AG04449 (cell line): ENCODE measurements at regions of chr18 and their contacts with region 1.

Region 1: DNA sequence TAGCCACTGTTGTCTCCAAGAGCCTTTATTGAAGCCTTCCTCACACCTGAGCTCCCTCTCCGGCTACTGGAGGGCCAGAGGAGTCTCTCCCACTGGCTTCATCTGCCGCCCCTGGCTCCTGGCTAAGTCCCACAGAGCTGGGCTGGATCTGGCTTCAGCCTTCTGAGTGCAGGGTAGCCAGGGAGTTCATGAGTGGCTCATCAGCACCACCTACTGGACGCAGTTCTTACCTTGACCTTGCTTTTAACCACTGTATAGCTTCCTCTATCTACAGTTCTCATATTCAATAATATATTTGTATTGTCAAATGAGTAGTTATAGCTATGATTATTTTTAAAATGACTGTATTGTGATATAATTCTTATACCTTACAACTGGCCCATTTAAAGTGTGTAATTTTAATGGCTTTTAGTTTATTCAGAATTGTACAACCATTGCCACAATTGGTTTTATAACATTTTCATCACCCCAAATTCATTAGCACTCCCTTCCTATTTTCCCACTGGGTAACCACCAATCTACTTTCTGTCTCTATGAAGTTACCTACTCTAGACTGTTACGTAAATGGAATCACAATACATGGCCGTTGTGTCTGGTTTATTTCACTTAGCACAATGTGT is 17.7 kb downstream of the CNDP1 start:
- DNase-seq: peak; percentile 29
- H3K4me3 ChIP-seq: no peak overlapping the region
- CTCF ChIP-seq: peak; percentile 81

Region 2: GRCh38 chr18:74196220-74197119 is 355.6 kb before region 1 on chr18:
- CTCF ChIA-PET with region 1: interaction called, 54 read pairs
- POLR2A ChIA-PET with region 1: no interaction called
- DNase-seq: no peak
- H3K4me3 ChIP-seq: peak overlapping the region; percentile 7
- CTCF ChIP-seq: peak; percentile 79

Region 3: GRCh38 chr18:74310411-74310810 is 241.6 kb before region 1 on chr18:
- CTCF ChIA-PET with region 1: interaction called, 10 read pairs
- POLR2A ChIA-PET with region 1: no interaction called
- DNase-seq: no peak
- H3K4me3 ChIP-seq: no peak overlapping the region
- CTCF ChIP-seq: peak; percentile 47

Region 4: GRCh38 chr18:74353169-74353775 is 198.8 kb before region 1 on chr18:
- CTCF ChIA-PET with region 1: interaction called, 71 read pairs
- POLR2A ChIA-PET with region 1: no interaction called
- DNase-seq: peak; percentile 19
- H3K4me3 ChIP-seq: no peak overlapping the region
- CTCF ChIP-seq: peak; percentile 77

Region 5: GRCh38 chr18:74541703-74542555 is 10.1 kb before region 1 on chr18:
- CTCF ChIA-PET with region 1: interaction called, 18 read pairs
- POLR2A ChIA-PET with region 1: no interaction called
- DNase-seq: no peak
- H3K4me3 ChIP-seq: no peak overlapping the region
- CTCF ChIP-seq: no peak

Region 6: GRCh38 chr18:74563999-74564398 is 12.0 kb after region 1 on chr18:
- CTCF ChIA-PET with region 1: interaction called, 11 read pairs
- POLR2A ChIA-PET with region 1: no interaction called
- DNase-seq: no peak
- H3K4me3 ChIP-seq: no peak overlapping the region
- CTCF ChIP-seq: no peak